ENCODE measurements at regions of chr1 and their contacts with region 1.

Region 1: GRCh38 chr1:8848663-8849386 is 29.7 kb downstream of the ENO1 start:
- DNase-seq: peak; percentile 89
- H3K4me3 ChIP-seq: no peak overlapping the region
- H3K27ac ChIP-seq: no peak overlapping the region
- H3K27me3 ChIP-seq: peaks cover 11% of the 10 kb centered on the region
- CTCF ChIP-seq: peak; percentile 96

Region 2: GRCh38 chr1:8560611-8561544 is 287.9 kb before region 1 on chr1:
- CTCF ChIA-PET with region 1: interaction called, 49 read pairs
- POLR2A ChIA-PET with region 1: no interaction called
- DNase-seq: no peak
- H3K4me3 ChIP-seq: no peak overlapping the region
- H3K27ac ChIP-seq: no peak overlapping the region
- H3K27me3 ChIP-seq: no peaks in the 10 kb centered on the region
- CTCF ChIP-seq: peak; percentile 95

Region 3: DNA sequence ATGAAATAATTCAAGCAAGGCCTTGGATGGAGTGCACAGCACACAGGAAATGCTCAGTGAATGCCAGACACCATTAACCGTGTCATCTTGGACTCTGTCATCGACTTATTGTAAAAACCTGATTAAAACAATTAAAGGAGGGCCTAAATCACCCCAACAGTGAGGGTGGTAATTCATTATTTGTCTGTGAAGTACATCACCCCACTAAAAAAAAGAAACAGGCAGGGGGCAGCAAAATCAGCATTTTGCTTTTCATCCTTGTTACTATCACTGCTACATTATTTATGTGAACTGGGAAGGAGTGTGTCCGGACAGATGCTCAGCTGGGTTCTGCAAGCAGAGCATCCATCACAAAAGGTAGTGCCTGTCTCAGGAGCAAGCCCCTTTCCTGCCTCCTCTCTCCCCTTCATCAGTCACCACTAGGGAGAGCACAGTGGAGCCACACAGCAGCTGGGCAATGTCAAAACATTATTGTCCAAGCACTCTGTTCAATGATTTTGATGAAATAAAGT is 129.9 kb before region 1 on chr1:
- CTCF ChIA-PET with region 1: interaction called, 51 read pairs
- POLR2A ChIA-PET with region 1: no interaction called
- DNase-seq: no peak
- H3K4me3 ChIP-seq: no peak overlapping the region
- H3K27ac ChIP-seq: no peak overlapping the region
- H3K27me3 ChIP-seq: no peaks in the 10 kb centered on the region
- CTCF ChIP-seq: peak; percentile 51

Region 4: GRCh38 chr1:8747879-8748825 is 100.7 kb before region 1 on chr1:
- CTCF ChIA-PET with region 1: interaction called, 15 read pairs
- POLR2A ChIA-PET with region 1: no interaction called
- DNase-seq: no peak
- H3K4me3 ChIP-seq: no peak overlapping the region
- H3K27ac ChIP-seq: no peak overlapping the region
- H3K27me3 ChIP-seq: no peaks in the 10 kb centered on the region
- CTCF ChIP-seq: no peak

Region 5: GRCh38 chr1:8831340-8831739 is 17.5 kb before region 1 on chr1:
- CTCF ChIA-PET with region 1: interaction called, 39 read pairs
- POLR2A ChIA-PET with region 1: no interaction called
- DNase-seq: no peak
- H3K4me3 ChIP-seq: no peak overlapping the region
- H3K27ac ChIP-seq: no peak overlapping the region
- H3K27me3 ChIP-seq: peaks cover 2% of the 10 kb centered on the region
- CTCF ChIP-seq: peak; percentile 64

Region 6: DNA sequence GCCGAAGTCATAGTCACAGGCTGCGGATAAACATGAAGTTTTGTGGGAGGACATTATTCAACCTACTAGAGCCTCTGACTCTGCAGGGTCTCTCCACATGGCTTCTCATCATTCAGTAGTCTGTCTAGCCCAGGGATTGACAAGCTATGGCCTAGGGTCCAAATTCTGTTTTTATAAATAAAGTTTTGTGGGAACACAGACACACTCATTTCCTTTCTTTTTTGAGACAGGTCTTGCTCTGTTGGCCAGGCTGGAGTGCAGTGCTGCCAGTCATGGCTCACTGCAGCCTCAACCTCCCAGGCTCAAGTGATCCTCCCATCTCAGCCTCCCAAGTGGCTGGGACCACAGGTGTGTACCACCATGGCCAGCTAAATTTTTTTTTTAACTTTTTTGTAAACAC is 37.8 kb after region 1 on chr1:
- CTCF ChIA-PET with region 1: no interaction called
- POLR2A ChIA-PET with region 1: no interaction called
- DNase-seq: no peak
- H3K4me3 ChIP-seq: no peak overlapping the region
- H3K27ac ChIP-seq: no peak overlapping the region
- H3K27me3 ChIP-seq: no peaks in the 10 kb centered on the region
- CTCF ChIP-seq: no peak

Region 7: DNA sequence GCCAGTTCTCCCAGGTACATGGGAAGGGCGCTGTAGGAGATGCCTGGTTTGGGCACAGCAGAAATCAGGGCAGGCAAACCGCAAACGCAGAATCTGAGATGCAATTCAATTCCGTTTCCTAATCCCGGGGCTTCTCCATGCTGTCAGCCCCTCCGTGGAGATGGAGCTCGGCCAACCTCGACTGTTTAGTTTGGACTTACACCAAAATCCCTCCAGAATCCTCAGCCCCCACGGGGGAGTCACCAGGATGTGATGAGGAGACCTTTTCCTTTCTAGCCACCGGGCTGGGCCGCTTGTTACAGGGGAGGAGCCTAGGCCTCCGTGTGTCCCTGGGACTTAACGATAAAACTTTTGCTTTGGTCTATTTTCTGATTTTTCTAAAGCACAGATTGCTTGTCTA is 169.5 kb after region 1 on chr1:
- CTCF ChIA-PET with region 1: no interaction called
- POLR2A ChIA-PET with region 1: no interaction called
- DNase-seq: no peak
- H3K4me3 ChIP-seq: no peak overlapping the region
- H3K27ac ChIP-seq: no peak overlapping the region
- H3K27me3 ChIP-seq: peaks cover 7% of the 10 kb centered on the region
- CTCF ChIP-seq: no peak